CD4-positive, alpha-beta T cell (primary cell): ENCODE measurements at regions of chr9 and their contacts with region 1.

Region 1: DNA sequence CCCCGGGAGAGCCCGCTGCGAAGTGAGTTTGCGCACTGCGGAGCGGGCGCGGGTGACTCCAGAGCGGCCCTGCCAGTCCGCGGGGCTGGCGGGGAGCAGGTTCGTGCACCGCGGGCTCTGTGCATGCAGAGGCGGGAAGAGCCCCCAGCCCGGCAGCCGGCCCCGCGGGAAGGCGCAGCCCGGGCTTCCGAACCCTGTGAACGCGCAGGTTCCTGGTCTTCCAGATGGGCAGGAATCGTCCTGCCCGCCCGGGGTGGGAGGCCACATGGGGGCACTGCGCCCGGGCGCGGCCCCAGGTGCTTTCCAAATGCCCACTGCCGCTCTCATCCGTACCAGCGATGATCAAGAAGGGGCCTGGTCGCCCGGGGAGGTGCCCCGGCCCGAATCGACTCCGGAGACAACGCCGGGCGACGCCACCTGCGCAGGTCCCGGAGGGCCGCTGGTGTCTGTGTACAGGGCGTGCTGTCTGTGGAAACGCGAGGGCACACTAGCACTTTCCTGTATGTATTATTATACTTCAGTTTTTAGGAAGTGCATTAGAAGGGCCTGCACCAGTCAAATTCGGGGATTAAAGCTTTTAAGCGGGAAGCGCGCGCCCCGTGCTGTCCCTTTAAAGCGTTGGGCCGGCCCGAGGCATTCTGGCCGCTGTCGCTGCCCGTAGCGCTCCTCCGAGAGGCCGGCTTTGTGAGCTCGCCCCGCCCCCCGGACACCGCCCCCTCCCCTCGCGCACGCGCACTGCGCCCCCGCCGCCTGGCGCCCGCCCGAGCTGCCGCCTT is at the start of gene WDR5:
- DNase-seq: peak; percentile 87 to 96 (median 90)
- ATAC-seq: peak; percentile 83
- H3K4me3 ChIP-seq: peak within 1 kb of the TSS; percentile 96
- H3K4me3 Mint-ChIP-seq: peak within 1 kb of the TSS; percentile 92
- H3K27ac ChIP-seq: peak within 1 kb of the TSS; percentile 72 to 80
- H3K27ac Mint-ChIP-seq: peak within 1 kb of the TSS; percentile 87
- H3K4me1 ChIP-seq: peaks cover 47% of the 10 kb centered on the region
- H3K4me1 Mint-ChIP-seq: peaks cover 48% of the 10 kb centered on the region
- H3K27me3 ChIP-seq: no peaks in the 10 kb centered on the region
- H3K27me3 Mint-ChIP-seq: no peaks in the 10 kb centered on the region
- CTCF ChIP-seq: no peak
- total RNA-seq, gene WDR5: 14.9 to 16.9 TPM

Region 2: DNA sequence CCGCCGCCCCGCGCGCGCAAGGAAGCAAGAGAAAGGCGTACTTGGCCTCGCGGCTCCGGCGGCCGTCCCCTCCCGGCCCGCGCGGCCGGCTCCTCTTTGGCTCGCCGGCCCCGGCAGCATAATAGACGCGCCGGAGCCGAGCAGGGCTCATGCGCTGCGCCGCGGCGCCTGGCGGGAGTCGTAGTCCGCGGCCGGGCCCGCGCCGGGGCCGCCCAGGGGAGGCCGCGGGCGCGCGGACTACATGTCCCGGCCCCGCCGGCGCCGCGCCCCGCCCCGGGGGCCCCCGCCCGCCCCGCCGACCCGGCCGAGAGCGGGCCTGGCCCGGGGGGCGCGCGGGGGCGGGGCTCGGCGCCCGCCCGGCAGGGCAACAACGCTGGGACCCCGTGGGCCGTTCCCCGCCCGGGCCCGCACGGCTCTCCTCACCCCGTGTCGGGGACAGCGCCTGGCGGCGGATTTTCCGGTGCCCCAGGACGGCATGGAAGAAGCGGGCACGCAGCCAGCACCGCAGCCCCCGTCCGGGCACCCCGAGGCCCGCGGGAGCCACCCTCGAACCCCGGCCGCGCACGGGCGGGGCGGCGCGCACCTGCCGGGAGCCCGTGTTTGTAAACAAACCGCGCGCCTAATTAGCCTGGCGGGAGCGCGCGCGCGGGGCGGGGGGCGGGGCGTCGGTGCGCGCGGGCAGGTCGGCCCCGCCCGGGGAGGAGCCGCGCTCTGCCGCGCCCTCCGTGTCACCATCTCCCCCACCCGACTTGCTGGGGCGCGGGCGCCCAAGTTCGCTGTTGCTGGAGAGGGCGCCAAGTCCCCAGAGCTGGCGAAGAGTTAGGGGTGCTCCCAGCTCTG is 67.4 kb before region 1 on chr9 and contains the start of gene BRD3:
- CTCF ChIA-PET with region 1: no interaction called
- POLR2A ChIA-PET with region 1: interaction called, 20 read pairs
- intact Hi-C with region 1: loop called (anchors 1 to 2 kb)
- DNase-seq: peak; percentile 63 to 96 (median 78)
- ATAC-seq: peak; percentile 76
- H3K4me3 ChIP-seq: peak within 1 kb of the TSS; percentile 79
- H3K4me3 Mint-ChIP-seq: peak within 1 kb of the TSS; percentile 97
- H3K27ac ChIP-seq: peak within 1 kb of the TSS; percentile 79 to 84
- H3K27ac Mint-ChIP-seq: peak within 1 kb of the TSS; percentile 98
- H3K4me1 ChIP-seq: peaks cover 47% of the 10 kb centered on the region
- H3K4me1 Mint-ChIP-seq: peaks cover 37% of the 10 kb centered on the region
- H3K27me3 ChIP-seq: peaks cover 9 to 15% of the 10 kb centered on the region in 2 experiments
- H3K27me3 Mint-ChIP-seq: peaks cover 22% of the 10 kb centered on the region
- CTCF ChIP-seq: no peak
- total RNA-seq, gene BRD3: 26.7 to 29.0 TPM

Region 3: GRCh38 chr9:134267881-134268724 is 132.6 kb after region 1 on chr9:
- CTCF ChIA-PET with region 1: no interaction called
- POLR2A ChIA-PET with region 1: no interaction called
- intact Hi-C with region 1: no loop called
- DNase-seq: peak in 2 of 14 experiments; percentile 48 to 49
- ATAC-seq: no peak
- H3K4me3 ChIP-seq: no peak overlapping the region
- H3K4me3 Mint-ChIP-seq: no peak overlapping the region
- H3K27ac ChIP-seq: no peak overlapping the region
- H3K27ac Mint-ChIP-seq: no peak overlapping the region
- H3K4me1 ChIP-seq: peaks cover 3% of the 10 kb centered on the region
- H3K4me1 Mint-ChIP-seq: no peaks in the 10 kb centered on the region
- H3K27me3 ChIP-seq: peaks cover 8 to 15% of the 10 kb centered on the region in 2 experiments
- H3K27me3 Mint-ChIP-seq: peaks cover 28% of the 10 kb centered on the region
- CTCF ChIP-seq: no peak

Region 4: DNA sequence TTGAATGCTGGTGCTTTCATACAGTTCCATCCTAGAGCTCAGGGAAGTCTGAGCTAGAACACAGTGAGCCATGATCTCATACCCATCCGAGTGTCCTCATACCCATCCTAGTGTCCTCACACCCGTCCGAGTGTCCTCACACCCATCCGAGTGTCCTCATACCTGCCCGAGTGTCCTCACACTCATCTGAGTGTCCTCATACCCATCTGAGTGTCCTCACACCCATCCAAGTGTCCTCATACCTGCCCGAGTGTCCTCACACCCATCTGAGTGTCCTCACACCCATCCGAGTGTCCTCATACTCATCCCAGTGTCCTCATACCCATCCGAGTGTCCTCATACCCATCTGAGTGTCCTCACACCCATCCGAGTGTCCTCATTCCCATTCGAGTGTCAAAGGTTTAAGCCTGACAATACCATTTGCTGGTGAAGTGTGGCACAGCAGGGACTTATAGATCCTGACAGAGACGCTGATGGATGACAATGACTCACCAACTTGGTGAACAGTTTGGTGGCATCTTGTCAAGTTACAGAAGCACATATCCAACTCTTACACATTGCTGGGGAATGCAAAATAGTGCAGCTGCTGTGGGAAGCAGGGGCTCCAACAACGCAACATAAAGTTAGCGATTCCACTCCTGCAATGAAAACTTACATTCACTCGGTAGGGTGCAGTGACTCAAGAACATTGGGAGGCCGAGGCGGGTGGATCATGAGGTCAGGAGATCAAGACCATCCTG is 429.1 kb after region 1 on chr9:
- CTCF ChIA-PET with region 1: no interaction called
- POLR2A ChIA-PET with region 1: no interaction called
- intact Hi-C with region 1: no loop called
- DNase-seq: no peak
- ATAC-seq: no peak
- H3K4me3 ChIP-seq: no peak overlapping the region
- H3K4me3 Mint-ChIP-seq: no peak overlapping the region
- H3K27ac ChIP-seq: no peak overlapping the region
- H3K27ac Mint-ChIP-seq: no peak overlapping the region
- H3K4me1 ChIP-seq: no peaks in the 10 kb centered on the region
- H3K4me1 Mint-ChIP-seq: no peaks in the 10 kb centered on the region
- H3K27me3 ChIP-seq: no peaks in the 10 kb centered on the region
- H3K27me3 Mint-ChIP-seq: no peaks in the 10 kb centered on the region
- CTCF ChIP-seq: no peak

Region 5: GRCh38 chr9:135500525-135501358 is 1365.2 kb after region 1 on chr9 and contains the start of gene MRPS2:
- CTCF ChIA-PET with region 1: no interaction called
- POLR2A ChIA-PET with region 1: no interaction called
- intact Hi-C with region 1: loop called in 1 of 2 experiments (anchors 10 kb)
- DNase-seq: peak; percentile 65 to 91 (median 82)
- ATAC-seq: peak; percentile 91
- H3K4me3 ChIP-seq: peak within 1 kb of the TSS; percentile 97
- H3K4me3 Mint-ChIP-seq: peak within 1 kb of the TSS; percentile 97
- H3K27ac ChIP-seq: peak within 1 kb of the TSS in 1 of 2 donors; percentile 41
- H3K27ac Mint-ChIP-seq: peak within 1 kb of the TSS; percentile 76
- H3K4me1 ChIP-seq: peaks cover 46% of the 10 kb centered on the region
- H3K4me1 Mint-ChIP-seq: peaks cover 24% of the 10 kb centered on the region
- H3K27me3 ChIP-seq: no peaks in the 10 kb centered on the region
- H3K27me3 Mint-ChIP-seq: no peaks in the 10 kb centered on the region
- CTCF ChIP-seq: peak; percentile 83
- total RNA-seq, gene MRPS2: 20.8 to 23.2 TPM